ENCODE measurements at regions of chr13 and their contacts with region 1.

Region 1: DNA sequence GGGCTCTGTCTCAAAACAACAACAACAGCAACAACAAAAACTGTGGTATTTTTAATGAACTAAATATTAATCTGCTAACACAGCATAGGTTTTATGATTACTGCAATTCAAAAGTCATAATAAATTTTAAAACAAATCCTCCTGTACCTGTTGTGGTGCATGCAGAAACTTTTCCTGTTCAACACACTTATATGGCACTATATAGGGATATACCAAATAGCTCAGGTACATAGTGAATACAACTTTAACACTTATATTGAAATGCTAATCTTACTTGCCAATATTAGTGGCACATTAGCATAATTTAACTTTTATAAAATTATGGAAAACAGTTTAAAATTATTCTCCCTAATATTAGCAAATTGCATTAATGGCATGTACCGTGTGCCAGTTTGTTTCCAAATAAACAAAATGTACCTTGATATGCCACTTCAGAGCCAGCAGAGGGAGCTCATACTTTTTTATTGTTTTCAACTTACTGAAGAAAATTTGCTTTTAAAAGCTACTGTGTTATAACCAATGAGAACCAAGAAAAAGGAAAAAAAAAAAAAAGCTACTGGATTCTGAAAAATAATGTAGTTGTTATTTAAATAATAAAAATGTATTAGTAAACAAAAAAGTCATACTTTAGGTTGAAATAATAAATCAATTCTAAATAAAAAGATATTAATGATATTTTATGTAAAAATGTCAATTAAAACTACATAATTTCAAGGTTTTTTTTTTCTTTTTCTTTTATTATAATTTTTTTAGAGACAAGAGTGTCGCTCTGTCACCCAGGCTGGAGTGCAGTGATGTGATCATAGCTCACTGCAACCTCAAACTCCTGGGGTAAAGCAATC is 18.0 kb upstream of the RBM26 start:
- DNase-seq: peak; percentile 11 to 47 (median 16)
- ATAC-seq: peak; percentile 79
- H3K4me3 ChIP-seq: no peak overlapping the region
- H3K27ac ChIP-seq: no peak overlapping the region
- H3K4me1 ChIP-seq: no peaks in the 10 kb centered on the region
- H3K27me3 ChIP-seq: no peaks in the 10 kb centered on the region
- CTCF ChIP-seq: peak; percentile 37 to 75 (median 40); a peak in 3 of 6 replicates
- EP300 ChIP-seq: no peak
- POLR2A ChIP-seq: no peak
- RAD21 ChIP-seq: peak; percentile 76 to 83

Region 2: GRCh38 chr13:79405829-79406596 is 18.0 kb before region 1 on chr13 and contains the start of gene RBM26:
- CTCF ChIA-PET with region 1: no interaction called
- POLR2A ChIA-PET with region 1: interaction called, 10 read pairs
- in situ Hi-C with region 1: no loop called
- intact Hi-C with region 1: no loop called
- DNase-seq: peak; percentile 79 to 94 (median 84)
- ATAC-seq: peak; percentile 75
- H3K4me3 ChIP-seq: peak within 1 kb of the TSS; percentile 70
- H3K27ac ChIP-seq: peak within 1 kb of the TSS; percentile 99
- H3K4me1 ChIP-seq: peaks cover 0 to 11% of the 10 kb centered on the region in 2 experiments; a peak in 2 of 5 replicates
- H3K27me3 ChIP-seq: no peaks in the 10 kb centered on the region
- CTCF ChIP-seq: no peak
- EP300 ChIP-seq: no peak
- POLR2A ChIP-seq: peak; percentile 92
- RAD21 ChIP-seq: 0 out of 4 replicates have a peak, but pooled peaks of 1 of the 2 experiments have one; percentile 3
- polyA plus RNA-seq, gene RBM26: 10.0 to 10.1 TPM

Region 3: GRCh38 chr13:79480954-79481684 is 57.1 kb after region 1 on chr13 and contains the start of gene NDFIP2:
- CTCF ChIA-PET with region 1: no interaction called
- POLR2A ChIA-PET with region 1: no interaction called
- in situ Hi-C with region 1: no loop called
- intact Hi-C with region 1: loop called (anchors 5 kb)
- DNase-seq: peak; percentile 62 to 91 (median 70)
- ATAC-seq: peak; percentile 93
- H3K4me3 ChIP-seq: peak within 1 kb of the TSS; percentile 93
- H3K27ac ChIP-seq: peak within 1 kb of the TSS; percentile 83
- H3K4me1 ChIP-seq: peaks cover 12 to 23% of the 10 kb centered on the region in 2 experiments; a peak in 3 of 5 replicates
- H3K27me3 ChIP-seq: no peaks in the 10 kb centered on the region
- CTCF ChIP-seq: 0 out of 6 replicates have a peak, but pooled peaks of 1 of the 3 experiments have one; percentile 0
- EP300 ChIP-seq: no peak
- POLR2A ChIP-seq: peak; percentile 82
- RAD21 ChIP-seq: no peak
- polyA plus RNA-seq, gene NDFIP2: 25.3 to 25.6 TPM

Region 4: GRCh38 chr13:79541426-79542049 is 117.5 kb after region 1 on chr13:
- CTCF ChIA-PET with region 1: interaction called, 48 read pairs
- POLR2A ChIA-PET with region 1: interaction called, 4 read pairs
- in situ Hi-C with region 1: loop called (anchors 5 kb)
- intact Hi-C with region 1: loop called (anchors 1 kb)
- DNase-seq: peak; percentile 13 to 61 (median 20)
- ATAC-seq: peak; percentile 54
- H3K4me3 ChIP-seq: no peak overlapping the region
- H3K27ac ChIP-seq: no peak overlapping the region
- H3K4me1 ChIP-seq: no peaks in the 10 kb centered on the region
- H3K27me3 ChIP-seq: no peaks in the 10 kb centered on the region
- CTCF ChIP-seq: peak; percentile 26 to 76 (median 35); a peak in 4 of 6 replicates
- EP300 ChIP-seq: no peak
- POLR2A ChIP-seq: no peak
- RAD21 ChIP-seq: peak; percentile 84 to 89

Measured in K562 (cell line).